ENCODE measurements at regions of chrX and their contacts with region 1.

Region 1: GRCh38 chrX:77743720-77744119 is 42.3 kb downstream of the ATRX start:
- DNase-seq: no peak
- ATAC-seq: peak in 1 of 8 donors; percentile 23
- H3K4me3 ChIP-seq: no peak overlapping the region
- H3K27ac ChIP-seq: peak overlapping the region in 2 of 10 donors; percentile 1 to 41
- H3K4me1 ChIP-seq: peaks cover 0 to 38% (median 15%) of the 10 kb centered on the region in 9 donors
- H3K27me3 ChIP-seq: no peaks in the 10 kb centered on the region
- CTCF ChIP-seq: no peak

Region 2: DNA sequence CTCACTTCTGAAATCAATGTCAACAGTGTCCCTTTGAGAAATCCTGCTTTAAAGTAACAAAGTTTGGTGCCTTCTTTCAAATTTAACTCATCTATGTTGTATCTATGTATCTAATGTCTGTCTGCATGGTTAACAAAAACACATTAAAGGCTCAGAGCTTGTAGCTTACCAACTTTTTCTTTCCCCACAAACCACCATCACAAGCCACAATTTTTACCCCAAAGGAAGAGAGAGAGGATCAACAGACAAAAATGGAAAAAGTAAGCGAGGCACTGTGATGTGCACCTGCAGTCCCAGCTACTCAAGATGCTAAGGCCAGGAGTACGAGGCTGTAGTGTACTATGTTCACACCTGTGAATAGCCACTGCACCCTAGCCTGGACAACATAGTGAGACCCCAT is 25.1 kb after region 1 on chrX:
- intact Hi-C with region 1: loop called in 1 of 10 experiments (anchors 1 kb)
- DNase-seq: no peak
- ATAC-seq: no peak
- H3K4me3 ChIP-seq: no peak overlapping the region
- H3K27ac ChIP-seq: peak overlapping the region in 1 of 10 donors; percentile 41
- H3K4me1 ChIP-seq: peaks cover 0 to 30% (median 11%) of the 10 kb centered on the region in 9 donors
- H3K27me3 ChIP-seq: no peaks in the 10 kb centered on the region
- CTCF ChIP-seq: no peak

Region 3: GRCh38 chrX:77893713-77894112 is 150.0 kb after region 1 on chrX:
- intact Hi-C with region 1: no loop called
- DNase-seq: no peak
- ATAC-seq: no peak
- H3K4me3 ChIP-seq: peak overlapping the region in 8 of 10 donors; percentile 35 to 79 (median 74)
- H3K27ac ChIP-seq: peak overlapping the region in 1 of 10 donors; percentile 91
- H3K4me1 ChIP-seq: peaks cover 0 to 34% (median 3%) of the 10 kb centered on the region in 9 donors
- H3K27me3 ChIP-seq: no peaks in the 10 kb centered on the region
- CTCF ChIP-seq: no peak

Region 4: DNA sequence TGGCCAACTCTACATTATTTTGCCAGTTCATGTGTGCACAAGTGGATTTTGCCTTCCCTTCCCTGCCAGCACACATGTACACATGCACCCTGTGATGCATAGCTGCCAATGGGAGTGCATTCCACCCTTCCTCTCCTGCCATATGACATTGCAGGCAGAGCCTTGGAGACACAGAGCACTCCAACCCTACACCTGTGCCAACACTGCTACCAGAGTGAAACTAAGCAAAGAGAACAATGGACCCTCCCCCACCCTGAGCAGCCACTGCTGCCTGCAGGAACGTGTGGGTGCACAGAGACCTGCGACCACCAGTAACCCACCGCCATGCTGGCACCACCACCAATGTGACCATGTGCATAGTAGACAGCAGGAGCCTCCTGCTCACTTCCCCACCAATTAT is 1545.0 kb after region 1 on chrX:
- intact Hi-C with region 1: no loop called
- DNase-seq: no peak
- ATAC-seq: no peak
- H3K4me3 ChIP-seq: no peak overlapping the region
- H3K27ac ChIP-seq: no peak overlapping the region
- H3K4me1 ChIP-seq: no peaks in the 10 kb centered on the region
- H3K27me3 ChIP-seq: peaks cover 0 to 15% (median 0%) of the 10 kb centered on the region in 7 donors
- CTCF ChIP-seq: no peak